ENCODE measurements at regions of chr2 and their contacts with region 1.

Region 1: GRCh38 chr2:62221141-62221540 is 25.2 kb downstream of the B3GNT2 start:
- DNase-seq: no peak
- ATAC-seq: no peak
- H3K4me3 ChIP-seq: no peak overlapping the region
- H3K4me3 Mint-ChIP-seq: peak overlapping the region in 2 of 10 donors; percentile 2 to 26
- H3K27ac ChIP-seq: no peak overlapping the region
- H3K27ac Mint-ChIP-seq: peak overlapping the region in 7 of 9 donors; percentile 2 to 76 (median 63)
- H3K4me1 ChIP-seq: peaks cover 12 to 54% of the 10 kb centered on the region in 2 donors
- H3K4me1 Mint-ChIP-seq: peaks cover 31 to 81% (median 68%) of the 10 kb centered on the region in 7 donors
- H3K27me3 ChIP-seq: no peaks in the 10 kb centered on the region
- H3K27me3 Mint-ChIP-seq: no peaks in the 10 kb centered on the region

Region 2: DNA sequence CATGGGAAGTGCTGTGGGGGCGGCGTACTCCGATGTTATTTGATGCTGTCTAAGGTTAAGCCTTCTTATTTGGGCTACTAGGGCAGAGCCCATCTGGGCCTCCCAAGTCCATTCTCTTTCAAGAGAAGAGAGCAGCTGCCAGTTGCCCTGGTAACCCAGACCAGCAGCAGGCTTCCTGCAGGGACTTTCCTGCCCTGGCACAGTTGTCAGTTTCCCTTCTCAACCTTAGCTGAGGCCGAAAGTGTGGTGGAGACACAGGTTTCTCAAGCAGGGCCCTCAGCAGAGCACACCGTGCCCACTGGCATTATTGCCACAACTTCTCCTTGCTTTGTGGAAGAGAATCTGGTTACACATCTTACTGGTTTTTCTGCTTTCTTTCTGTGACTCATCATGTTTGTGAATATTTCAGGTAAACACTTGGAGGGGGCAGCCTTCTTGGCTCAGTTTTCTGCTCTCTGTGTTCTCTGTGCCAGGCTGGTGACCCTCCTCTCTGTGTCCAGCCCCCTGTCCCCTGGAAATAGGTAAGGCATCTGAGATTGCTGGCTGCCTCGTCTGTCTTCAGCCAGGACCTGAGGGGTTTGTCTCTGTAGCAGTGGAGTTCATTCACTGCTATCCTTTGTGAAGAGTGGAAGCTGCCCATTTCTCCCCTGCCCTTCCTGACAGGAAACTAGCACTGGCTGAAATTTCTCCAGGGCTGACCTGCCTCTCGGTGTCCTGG is 85.8 kb after region 1 on chr2:
- CTCF ChIA-PET with region 1: no interaction called
- POLR2A ChIA-PET with region 1: no interaction called
- intact Hi-C with region 1: loop called in 1 of 2 experiments (anchors 5 kb)
- DNase-seq: peak in 1 of 9 donors; percentile 42
- ATAC-seq: peak; percentile 25
- H3K4me3 ChIP-seq: no peak overlapping the region
- H3K4me3 Mint-ChIP-seq: peak overlapping the region in 5 of 10 donors; percentile 23 to 67 (median 54)
- H3K27ac ChIP-seq: no peak overlapping the region
- H3K27ac Mint-ChIP-seq: peak overlapping the region in 7 of 9 donors; percentile 1 to 86 (median 52)
- H3K4me1 ChIP-seq: peaks cover 29 to 84% of the 10 kb centered on the region in 2 donors
- H3K4me1 Mint-ChIP-seq: peaks cover 54 to 79% (median 71%) of the 10 kb centered on the region in 7 donors
- H3K27me3 ChIP-seq: no peaks in the 10 kb centered on the region
- H3K27me3 Mint-ChIP-seq: peaks cover 0 to 2% (median 0%) of the 10 kb centered on the region in 5 donors